Keratinocyte (primary cell): ENCODE measurements at regions of chr16 and their contacts with region 1.

Region 1: GRCh38 chr16:9123871-9124270 is 32.4 kb downstream of the HAPSTR1 start:
- DNase-seq: no peak
- H3K4me3 ChIP-seq: no peak overlapping the region
- H3K27ac ChIP-seq: no peak overlapping the region
- H3K4me1 ChIP-seq: peaks cover 54% of the 10 kb centered on the region
- H3K27me3 ChIP-seq: no peaks in the 10 kb centered on the region
- CTCF ChIP-seq: no peak

Region 2: GRCh38 chr16:8692502-8692901 is 431.4 kb before region 1 on chr16:
- dilution Hi-C with region 1: no loop called
- DNase-seq: no peak
- H3K4me3 ChIP-seq: no peak overlapping the region
- H3K27ac ChIP-seq: no peak overlapping the region
- H3K4me1 ChIP-seq: no peaks in the 10 kb centered on the region
- H3K27me3 ChIP-seq: no peaks in the 10 kb centered on the region
- CTCF ChIP-seq: no peak

Region 3: GRCh38 chr16:8936421-8936820 is 187.4 kb before region 1 on chr16:
- dilution Hi-C with region 1: loop called (anchors 25 kb)
- DNase-seq: peak; percentile 17
- H3K4me3 ChIP-seq: no peak overlapping the region
- H3K27ac ChIP-seq: no peak overlapping the region
- H3K4me1 ChIP-seq: peaks cover 17% of the 10 kb centered on the region
- H3K27me3 ChIP-seq: no peaks in the 10 kb centered on the region
- CTCF ChIP-seq: peak; percentile 70 to 82 (median 78)

Region 4: DNA sequence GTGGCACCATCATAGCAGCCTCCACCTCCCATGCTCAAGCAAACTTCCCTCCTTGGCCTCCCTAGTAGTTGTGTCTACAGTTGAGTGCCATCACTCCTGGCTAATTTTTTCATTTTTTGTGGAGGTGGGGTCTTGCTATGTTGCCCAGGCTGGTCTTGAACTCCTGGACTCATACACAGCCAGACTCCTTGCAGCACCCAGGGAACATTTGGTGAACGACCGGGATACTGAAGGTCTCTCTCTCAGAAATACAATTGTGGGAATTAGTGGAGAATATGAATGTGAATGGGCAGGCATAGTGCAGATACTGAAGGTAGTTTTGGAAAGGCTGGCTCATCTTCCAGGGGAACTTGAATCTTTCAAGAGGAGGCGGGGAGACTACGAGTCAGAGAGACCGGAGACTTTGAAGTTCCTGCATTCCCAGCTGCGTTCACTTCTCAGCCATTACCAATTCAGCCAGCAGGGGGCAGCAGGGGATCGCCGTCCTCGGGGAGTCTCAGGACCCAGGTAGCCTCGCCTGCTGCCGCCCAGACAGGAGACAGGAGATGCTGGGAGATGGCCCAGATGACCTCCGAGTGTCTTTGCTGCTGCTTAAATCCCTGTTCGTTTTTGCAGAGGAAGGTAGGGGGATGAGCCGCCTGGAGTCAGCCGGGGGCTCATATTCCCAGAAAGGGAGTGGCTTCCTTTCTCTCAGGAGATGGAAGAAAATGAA is 36.1 kb after region 1 on chr16:
- dilution Hi-C with region 1: no loop called
- DNase-seq: peak; percentile 19
- H3K4me3 ChIP-seq: no peak overlapping the region
- H3K27ac ChIP-seq: no peak overlapping the region
- H3K4me1 ChIP-seq: no peaks in the 10 kb centered on the region
- H3K27me3 ChIP-seq: no peaks in the 10 kb centered on the region
- CTCF ChIP-seq: peak; percentile 82 to 92 (median 86)

Region 5: GRCh38 chr16:9567666-9568065 is 443.8 kb after region 1 on chr16:
- dilution Hi-C with region 1: no loop called
- DNase-seq: no peak
- H3K4me3 ChIP-seq: no peak overlapping the region
- H3K27ac ChIP-seq: no peak overlapping the region
- H3K4me1 ChIP-seq: no peaks in the 10 kb centered on the region
- H3K27me3 ChIP-seq: no peaks in the 10 kb centered on the region
- CTCF ChIP-seq: no peak